ENCODE measurements at regions of chrX and their contacts with region 1.

Region 1: GRCh38 chrX:57156397-57157049 is 19.3 kb upstream of the SPIN2A start:
- DNase-seq: no peak
- CTCF ChIP-seq: peak; percentile 34

Region 2: DNA sequence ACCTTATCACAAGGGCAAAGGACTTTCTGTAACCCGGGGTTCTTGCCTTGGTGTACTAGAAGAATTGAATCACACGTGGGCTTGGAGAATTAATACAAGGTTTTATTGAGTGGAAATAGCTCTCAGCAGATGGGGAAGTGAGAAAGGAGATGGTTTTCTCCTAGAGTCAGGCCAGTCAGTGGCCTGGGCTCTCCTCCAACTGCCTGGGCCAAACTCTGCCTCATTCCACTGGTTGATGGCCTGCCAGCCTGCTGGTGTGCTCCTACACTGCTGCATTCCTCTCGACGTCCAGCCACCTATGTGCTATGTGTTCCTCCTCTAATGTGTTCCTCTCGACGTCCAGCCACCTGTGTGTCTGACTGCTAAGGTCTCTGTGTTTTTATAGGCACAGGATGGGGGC is 16.0 kb after region 1 on chrX:
- CTCF ChIA-PET with region 1: no interaction called
- POLR2A ChIA-PET with region 1: no interaction called
- DNase-seq: no peak
- CTCF ChIP-seq: no peak

Region 3: GRCh38 chrX:57453901-57454300 is 297.4 kb after region 1 on chrX:
- CTCF ChIA-PET with region 1: interaction called, 13 read pairs
- POLR2A ChIA-PET with region 1: no interaction called
- DNase-seq: peak; percentile 24
- CTCF ChIP-seq: peak; percentile 20

Measured in GM10248 (cell line).